ENCODE measurements at regions of chr2 and their contacts with region 1.

Region 1: GRCh38 chr2:28821295-28821958 is 10.8 kb downstream of the SPDYA start:
- DNase-seq: peak; percentile 30 to 45
- ATAC-seq: peak; percentile 85

Region 2: DNA sequence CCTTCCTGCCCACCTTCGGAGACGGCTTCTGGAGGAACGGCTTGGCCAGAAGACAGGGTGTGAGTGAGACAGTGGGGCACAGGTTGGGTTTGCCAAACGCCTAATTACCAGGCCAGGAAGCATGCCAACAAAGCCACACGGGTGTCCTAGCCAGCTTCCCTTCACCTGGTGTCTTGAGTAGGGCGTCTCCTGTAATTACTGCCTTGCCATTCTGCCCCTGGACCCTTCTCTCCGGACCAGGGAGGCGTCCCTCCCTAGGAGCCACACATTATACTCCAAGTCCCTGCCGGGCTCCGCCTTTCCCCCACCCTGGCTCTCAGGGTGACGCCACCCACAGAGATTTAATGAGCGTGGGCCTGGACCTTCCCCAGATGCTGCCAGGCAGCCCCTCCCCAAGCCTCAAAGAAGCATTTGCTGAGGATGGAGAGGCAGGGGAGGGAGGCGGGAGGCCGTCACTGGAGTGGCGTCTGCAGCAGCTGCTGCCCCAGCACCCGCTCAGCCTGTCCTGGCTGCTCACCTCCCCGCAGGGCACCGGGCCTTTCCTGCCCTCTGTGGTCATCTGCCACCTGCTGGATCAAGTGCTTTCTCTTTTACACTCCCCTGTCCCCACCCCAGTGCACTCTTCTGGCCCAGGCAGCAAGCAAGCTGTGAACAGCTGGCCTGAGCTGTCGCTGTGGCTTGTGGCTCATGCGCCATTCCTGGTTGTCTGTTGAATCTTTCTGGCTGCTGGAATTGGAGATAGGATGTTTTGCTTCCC is 408.1 kb before region 1 on chr2:
- intact Hi-C with region 1: no loop called
- DNase-seq: peak; percentile 60 to 67
- ATAC-seq: peak; percentile 64

Region 3: GRCh38 chr2:28870146-28870891 is 48.9 kb after region 1 on chr2 and contains the start of gene TRMT61B:
- intact Hi-C with region 1: no loop called
- DNase-seq: peak; percentile 94 to 99
- ATAC-seq: peak; percentile 99
- total RNA-seq, gene TRMT61B: 8.3 to 12.1 TPM

Region 4: GRCh38 chr2:29196792-29197788 is 375.7 kb after region 1 on chr2:
- intact Hi-C with region 1: loop called in 1 of 2 experiments (anchors 5 kb)
- DNase-seq: peak; percentile 40 to 78
- ATAC-seq: peak; percentile 87

Measured in left colon (tissue), 2 donors.